CD8-positive, alpha-beta T cell (primary cell): ENCODE measurements at regions of chr1 and their contacts with region 1.

Region 1: DNA sequence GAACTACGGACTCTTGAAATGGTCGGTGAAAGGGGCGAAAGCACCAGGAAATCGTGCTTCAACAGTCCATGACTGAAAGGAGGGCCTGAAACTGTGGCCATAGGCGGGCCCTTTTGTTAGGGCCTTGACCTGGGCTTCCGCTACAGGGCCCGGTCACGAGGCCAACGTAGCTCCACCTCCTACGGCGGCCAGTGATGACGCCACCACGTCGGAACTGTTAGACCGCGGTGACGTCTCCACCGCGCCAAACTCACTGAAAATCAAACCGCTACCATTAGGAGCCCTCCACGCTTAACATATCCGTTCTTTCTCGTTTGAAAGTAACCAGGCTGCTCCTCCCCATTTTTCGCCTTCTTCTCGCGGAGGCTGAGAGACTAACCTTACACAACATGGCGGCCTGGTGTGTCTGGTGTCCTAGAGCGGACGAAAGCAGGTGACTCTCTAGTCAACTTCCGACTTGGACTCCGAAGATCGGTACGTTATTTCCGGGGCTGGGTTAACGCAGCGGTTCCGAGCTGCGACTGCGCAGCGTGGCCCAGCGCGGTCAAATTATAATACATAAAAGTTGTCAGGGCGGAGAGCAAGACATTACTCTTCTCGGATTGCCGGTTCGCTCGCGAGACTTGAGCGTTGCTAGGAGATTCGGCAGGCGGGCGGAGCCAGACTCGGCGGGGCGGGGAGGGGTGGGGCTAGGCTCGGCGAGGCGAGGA is 376 bp upstream of the CACYBP start:
- DNase-seq: peak; percentile 95 to 99 (median 96)
- ATAC-seq: peak; percentile 76
- H3K4me3 ChIP-seq: peak overlapping the region; percentile 74 to 80
- H3K4me3 Mint-ChIP-seq: no peak overlapping the region
- H3K27ac ChIP-seq: peak overlapping the region; percentile 99 to 100
- H3K27ac Mint-ChIP-seq: no peak overlapping the region
- H3K4me1 ChIP-seq: peaks cover 31% of the 10 kb centered on the region
- H3K4me1 Mint-ChIP-seq: peaks cover 46% of the 10 kb centered on the region
- H3K27me3 ChIP-seq: no peaks in the 10 kb centered on the region
- H3K27me3 Mint-ChIP-seq: no peaks in the 10 kb centered on the region
- CTCF ChIP-seq: no peak

Region 2: GRCh38 chr1:173714759-173715537 is 1284.4 kb before region 1 on chr1 and contains the start of gene KLHL20:
- CTCF ChIA-PET with region 1: no interaction called
- POLR2A ChIA-PET with region 1: interaction called, 3 read pairs
- intact Hi-C with region 1: loop called (anchors 5 to 10 kb)
- DNase-seq: peak; percentile 72 to 94 (median 83)
- ATAC-seq: peak; percentile 98
- H3K4me3 ChIP-seq: peak within 1 kb of the TSS; percentile 80 to 86
- H3K4me3 Mint-ChIP-seq: peak within 1 kb of the TSS; percentile 96
- H3K27ac ChIP-seq: peak within 1 kb of the TSS; percentile 76 to 87
- H3K27ac Mint-ChIP-seq: peak within 1 kb of the TSS; percentile 97
- H3K4me1 ChIP-seq: peaks cover 24% of the 10 kb centered on the region
- H3K4me1 Mint-ChIP-seq: peaks cover 38% of the 10 kb centered on the region
- H3K27me3 ChIP-seq: peaks cover 0 to 2% of the 10 kb centered on the region in 2 experiments
- H3K27me3 Mint-ChIP-seq: peaks cover 7% of the 10 kb centered on the region
- CTCF ChIP-seq: no peak
- total RNA-seq, gene KLHL20: 27.9 to 29.0 TPM

Region 3: DNA sequence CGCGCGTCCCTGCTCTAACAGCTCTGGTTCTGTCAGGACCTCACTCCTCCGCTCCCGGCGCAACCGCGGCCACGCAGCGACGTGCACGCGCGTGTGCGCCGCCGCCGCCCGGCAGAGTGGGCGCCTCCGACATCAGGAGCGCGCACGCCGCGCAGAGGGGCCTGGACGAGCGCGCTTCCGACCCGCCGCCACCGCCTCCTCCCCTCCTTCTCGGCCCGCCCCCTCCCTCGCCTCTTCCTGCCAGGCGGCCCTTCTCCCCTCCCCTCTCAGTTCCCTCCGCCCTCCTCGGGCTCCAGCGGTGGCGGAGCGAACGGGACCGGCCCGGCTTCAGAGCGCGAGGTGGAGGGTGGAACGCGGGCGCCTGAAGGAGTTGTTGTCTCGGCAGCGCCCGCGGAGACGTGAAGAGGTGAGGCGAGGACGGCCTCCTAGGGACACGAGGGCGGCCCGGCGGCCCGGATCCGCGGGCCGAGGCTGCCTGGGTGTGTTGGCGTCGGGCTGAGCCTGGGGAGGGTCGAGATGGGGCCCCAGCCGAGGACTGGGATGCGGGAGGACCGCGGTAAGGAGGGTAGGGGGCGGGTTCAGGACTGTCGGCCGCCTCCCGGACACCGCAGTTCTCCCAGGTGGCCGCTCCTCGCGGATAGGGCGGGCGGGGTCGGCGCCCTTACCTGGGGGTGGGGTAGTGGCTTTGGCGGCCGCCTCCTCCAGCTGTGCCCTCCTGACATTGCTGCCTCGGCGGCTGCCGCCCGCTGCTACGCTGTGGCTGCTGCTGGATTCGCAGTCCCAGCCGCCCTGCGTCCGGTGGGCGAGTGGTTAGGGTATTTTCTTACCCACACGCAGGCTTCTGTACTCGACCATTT is 839.9 kb before region 1 on chr1 and contains the start of gene RABGAP1L:
- CTCF ChIA-PET with region 1: no interaction called
- POLR2A ChIA-PET with region 1: no interaction called
- intact Hi-C with region 1: loop called in 1 of 2 experiments (anchors 1 kb)
- DNase-seq: peak; percentile 90 to 98 (median 93)
- ATAC-seq: peak; percentile 90
- H3K4me3 ChIP-seq: peak within 1 kb of the TSS; percentile 73 to 74
- H3K4me3 Mint-ChIP-seq: peak within 1 kb of the TSS; percentile 91
- H3K27ac ChIP-seq: peak within 1 kb of the TSS; percentile 73 to 93
- H3K27ac Mint-ChIP-seq: peak within 1 kb of the TSS; percentile 96
- H3K4me1 ChIP-seq: peaks cover 16% of the 10 kb centered on the region
- H3K4me1 Mint-ChIP-seq: peaks cover 53% of the 10 kb centered on the region
- H3K27me3 ChIP-seq: no peaks in the 10 kb centered on the region
- H3K27me3 Mint-ChIP-seq: no peaks in the 10 kb centered on the region
- CTCF ChIP-seq: no peak
- total RNA-seq, gene RABGAP1L: 60.7 to 65.1 TPM

Region 4: GRCh38 chr1:174769961-174770549 is 229.3 kb before region 1 on chr1:
- CTCF ChIA-PET with region 1: interaction called, 21 read pairs
- POLR2A ChIA-PET with region 1: interaction called, 5 read pairs
- intact Hi-C with region 1: loop called (anchors 1 kb)
- DNase-seq: peak in 2 of 9 experiments; percentile 64 to 75
- ATAC-seq: peak; percentile 65
- H3K4me3 ChIP-seq: no peak overlapping the region
- H3K4me3 Mint-ChIP-seq: no peak overlapping the region
- H3K27ac ChIP-seq: no peak overlapping the region
- H3K27ac Mint-ChIP-seq: no peak overlapping the region
- H3K4me1 ChIP-seq: no peaks in the 10 kb centered on the region
- H3K4me1 Mint-ChIP-seq: peaks cover 3% of the 10 kb centered on the region
- H3K27me3 ChIP-seq: no peaks in the 10 kb centered on the region
- H3K27me3 Mint-ChIP-seq: no peaks in the 10 kb centered on the region
- CTCF ChIP-seq: peak; percentile 78

Region 5: GRCh38 chr1:174883409-174883808 is 116.0 kb before region 1 on chr1:
- CTCF ChIA-PET with region 1: interaction called, 14 read pairs
- POLR2A ChIA-PET with region 1: interaction called, 11 read pairs
- intact Hi-C with region 1: loop called (anchors 1 to 5 kb)
- DNase-seq: peak in 2 of 9 experiments; percentile 39 to 53
- ATAC-seq: peak; percentile 62
- H3K4me3 ChIP-seq: no peak overlapping the region
- H3K4me3 Mint-ChIP-seq: no peak overlapping the region
- H3K27ac ChIP-seq: no peak overlapping the region
- H3K27ac Mint-ChIP-seq: no peak overlapping the region
- H3K4me1 ChIP-seq: no peaks in the 10 kb centered on the region
- H3K4me1 Mint-ChIP-seq: peaks cover 6% of the 10 kb centered on the region
- H3K27me3 ChIP-seq: no peaks in the 10 kb centered on the region
- H3K27me3 Mint-ChIP-seq: no peaks in the 10 kb centered on the region
- CTCF ChIP-seq: no peak

Region 6: DNA sequence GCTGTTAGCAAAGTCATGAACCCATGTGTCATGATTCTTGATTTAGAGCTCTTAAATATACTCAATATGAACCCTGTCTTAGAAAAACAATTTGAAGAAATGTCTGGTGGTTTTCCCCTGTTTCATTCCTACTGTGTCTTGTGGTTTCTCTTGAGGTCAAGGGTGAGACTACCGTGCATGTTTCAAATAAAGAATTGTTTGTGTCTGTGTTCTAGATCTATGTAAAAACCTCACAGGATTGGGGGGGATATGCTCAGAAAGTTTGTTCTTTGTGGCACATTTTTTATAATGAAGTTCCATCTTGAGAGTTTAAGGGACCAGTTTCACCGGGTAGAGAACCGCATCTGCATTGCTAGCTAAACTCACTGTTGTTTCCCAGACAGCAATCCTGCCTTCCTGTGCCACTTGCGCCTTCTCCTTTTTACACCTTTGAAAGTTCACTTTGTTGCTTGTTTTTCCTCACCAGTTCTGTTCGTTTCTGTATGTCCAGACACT is 30.6 kb before region 1 on chr1:
- CTCF ChIA-PET with region 1: interaction called, 9 read pairs
- POLR2A ChIA-PET with region 1: interaction called, 167 read pairs
- intact Hi-C with region 1: loop called (anchors 1 kb)
- DNase-seq: peak in 6 of 9 experiments; percentile 27 to 92 (median 53)
- ATAC-seq: peak; percentile 48
- H3K4me3 ChIP-seq: peak overlapping the region; percentile 2 to 16
- H3K4me3 Mint-ChIP-seq: peak overlapping the region; percentile 77
- H3K27ac ChIP-seq: peak overlapping the region; percentile 59 to 89
- H3K27ac Mint-ChIP-seq: peak overlapping the region; percentile 98
- H3K4me1 ChIP-seq: peaks cover 73% of the 10 kb centered on the region
- H3K4me1 Mint-ChIP-seq: peaks cover 76% of the 10 kb centered on the region
- H3K27me3 ChIP-seq: no peaks in the 10 kb centered on the region
- H3K27me3 Mint-ChIP-seq: no peaks in the 10 kb centered on the region
- CTCF ChIP-seq: no peak

Region 7: DNA sequence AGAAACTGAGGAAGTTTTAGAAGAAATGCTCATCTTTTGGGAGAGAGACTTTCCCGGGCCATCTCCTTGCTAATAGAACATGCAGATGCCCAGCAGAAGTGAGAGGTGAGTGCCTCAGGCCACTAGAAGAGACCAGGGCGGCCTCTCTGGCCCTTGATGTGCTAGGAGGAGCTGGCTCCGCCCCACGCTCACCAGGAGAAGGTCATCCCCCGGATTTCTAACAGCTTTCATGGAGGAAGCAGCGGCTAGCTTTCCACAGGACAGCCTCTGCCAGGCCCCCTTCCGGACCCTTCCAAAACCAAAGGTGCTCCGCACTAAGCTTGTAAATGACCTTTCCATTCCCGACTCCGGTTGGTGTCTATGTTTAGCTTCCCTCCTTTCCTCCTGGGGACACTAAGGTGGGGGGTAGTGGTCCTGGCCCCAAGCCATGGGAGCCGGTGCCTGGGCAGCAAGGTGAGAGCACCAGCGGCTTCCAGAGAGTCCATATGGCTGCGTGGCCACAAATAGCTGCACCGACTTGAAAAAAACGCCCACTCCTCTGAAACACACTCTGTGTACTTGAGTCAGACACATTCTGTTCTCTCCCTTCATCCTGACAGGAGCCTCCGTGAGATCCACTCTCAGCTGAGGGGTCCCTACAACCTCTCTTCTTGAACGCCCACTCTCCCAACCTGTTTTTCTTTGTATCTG is 494.1 kb after region 1 on chr1:
- CTCF ChIA-PET with region 1: no interaction called
- POLR2A ChIA-PET with region 1: no interaction called
- intact Hi-C with region 1: no loop called
- DNase-seq: no peak
- ATAC-seq: no peak
- H3K4me3 ChIP-seq: no peak overlapping the region
- H3K4me3 Mint-ChIP-seq: no peak overlapping the region
- H3K27ac ChIP-seq: no peak overlapping the region
- H3K27ac Mint-ChIP-seq: no peak overlapping the region
- H3K4me1 ChIP-seq: no peaks in the 10 kb centered on the region
- H3K4me1 Mint-ChIP-seq: no peaks in the 10 kb centered on the region
- H3K27me3 ChIP-seq: no peaks in the 10 kb centered on the region
- H3K27me3 Mint-ChIP-seq: peaks cover 5% of the 10 kb centered on the region
- CTCF ChIP-seq: no peak